CD4-positive, alpha-beta T cell (primary cell): ENCODE measurements at regions of chr9 and their contacts with region 1.

Region 1: DNA sequence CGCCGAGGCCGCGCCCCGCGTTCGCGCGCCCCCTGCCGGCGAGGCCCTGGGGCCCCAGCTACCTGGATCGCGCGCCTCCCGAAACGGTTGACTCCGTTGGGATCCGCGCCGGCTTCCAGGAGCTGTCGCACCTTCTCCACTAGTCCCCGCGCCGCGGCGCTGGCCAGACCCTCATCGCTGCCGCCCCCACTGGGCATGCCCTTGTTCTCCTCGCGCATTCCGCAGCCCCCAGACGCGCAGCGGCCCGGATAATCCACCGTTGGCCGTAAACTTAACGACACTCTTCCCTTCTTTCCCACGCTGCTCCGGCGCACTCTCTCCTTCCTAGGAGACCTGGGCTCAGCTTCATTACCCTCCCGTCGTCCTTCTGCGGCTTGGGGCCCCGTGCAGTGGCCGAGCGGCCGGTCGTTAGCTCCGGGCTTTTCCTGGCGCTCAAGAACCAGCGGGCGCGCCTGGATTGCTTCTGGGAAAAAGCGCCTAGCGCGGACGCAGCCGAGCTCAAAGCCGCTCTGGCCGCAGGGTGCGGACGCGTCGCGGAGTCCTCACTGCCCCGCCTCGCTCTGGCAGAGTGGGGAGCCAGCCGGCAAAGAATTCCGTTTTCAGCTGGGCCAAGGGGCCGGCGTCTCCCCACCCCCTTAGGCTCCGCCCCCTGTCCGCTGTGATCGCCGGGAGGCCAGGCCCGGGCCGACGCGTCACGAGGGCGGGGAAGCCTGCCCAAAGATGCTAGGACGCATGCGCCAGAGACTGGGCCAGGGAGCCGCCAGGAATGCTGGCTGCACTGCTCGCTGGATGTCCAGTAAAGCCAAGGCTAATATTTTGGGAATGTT is at the start of gene CDKN2B:
- DNase-seq: peak in 13 of 14 experiments; percentile 37 to 86 (median 54)
- ATAC-seq: peak; percentile 67
- H3K4me3 ChIP-seq: peak within 1 kb of the TSS; percentile 60
- H3K4me3 Mint-ChIP-seq: peak within 1 kb of the TSS; percentile 68
- H3K27ac ChIP-seq: no peak within 1 kb of the TSS
- H3K27ac Mint-ChIP-seq: no peak within 1 kb of the TSS
- H3K4me1 ChIP-seq: peaks cover 25% of the 10 kb centered on the region
- H3K4me1 Mint-ChIP-seq: peaks cover 23% of the 10 kb centered on the region
- H3K27me3 ChIP-seq: peaks cover 41 to 72% of the 10 kb centered on the region in 2 experiments
- H3K27me3 Mint-ChIP-seq: peaks cover 89% of the 10 kb centered on the region
- CTCF ChIP-seq: peak; percentile 86
- total RNA-seq, gene CDKN2B: not detected

Region 2: GRCh38 chr9:21974548-21975409 is 34.2 kb before region 1 on chr9:
- CTCF ChIA-PET with region 1: interaction called, 10 read pairs
- POLR2A ChIA-PET with region 1: interaction called, 4 read pairs
- intact Hi-C with region 1: loop called (anchors 5 kb)
- DNase-seq: peak in 5 of 14 experiments; percentile 21 to 59 (median 51)
- ATAC-seq: peak; percentile 72
- H3K4me3 ChIP-seq: peak overlapping the region; percentile 54
- H3K4me3 Mint-ChIP-seq: peak overlapping the region; percentile 83
- H3K27ac ChIP-seq: no peak overlapping the region
- H3K27ac Mint-ChIP-seq: no peak overlapping the region
- H3K4me1 ChIP-seq: peaks cover 28% of the 10 kb centered on the region
- H3K4me1 Mint-ChIP-seq: peaks cover 22% of the 10 kb centered on the region
- H3K27me3 ChIP-seq: peaks cover 81 to 99% of the 10 kb centered on the region in 2 experiments
- H3K27me3 Mint-ChIP-seq: peaks cover 98% of the 10 kb centered on the region
- CTCF ChIP-seq: no peak

Region 3: DNA sequence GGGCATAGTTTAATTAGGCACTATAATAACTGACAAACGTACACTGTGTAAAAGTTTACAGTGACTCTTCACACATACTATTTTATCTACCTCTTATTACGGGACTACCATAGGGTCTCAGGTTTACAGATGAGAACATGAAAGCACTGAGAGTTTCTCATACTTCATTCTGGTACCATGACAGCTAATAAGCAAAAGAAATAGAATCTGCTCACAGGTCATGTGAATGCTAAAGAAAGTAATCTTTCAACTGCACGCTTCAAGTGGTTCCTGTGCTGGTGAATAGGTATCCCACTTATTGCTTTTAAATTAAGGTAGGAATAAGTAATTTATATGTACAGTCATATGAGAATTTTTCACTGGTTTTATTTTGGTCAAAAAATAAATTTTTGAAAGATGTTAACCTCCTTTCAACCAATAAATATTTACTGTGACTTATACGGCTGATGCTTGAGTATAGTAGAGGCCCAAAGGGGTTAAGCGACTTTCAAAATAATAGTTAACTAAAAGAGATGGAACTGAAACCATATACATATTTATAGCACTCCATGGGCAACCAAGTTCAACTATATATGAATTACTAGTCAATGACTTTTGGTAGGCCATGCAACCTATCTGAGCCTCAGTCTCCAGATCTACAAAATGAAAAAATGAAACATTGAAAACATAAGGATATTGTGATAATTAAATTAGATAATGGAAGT is 22.8 kb before region 1 on chr9:
- CTCF ChIA-PET with region 1: interaction called, 14 read pairs
- POLR2A ChIA-PET with region 1: no interaction called
- intact Hi-C with region 1: no loop called
- DNase-seq: no peak
- ATAC-seq: no peak
- H3K4me3 ChIP-seq: no peak overlapping the region
- H3K4me3 Mint-ChIP-seq: no peak overlapping the region
- H3K27ac ChIP-seq: no peak overlapping the region
- H3K27ac Mint-ChIP-seq: no peak overlapping the region
- H3K4me1 ChIP-seq: no peaks in the 10 kb centered on the region
- H3K4me1 Mint-ChIP-seq: no peaks in the 10 kb centered on the region
- H3K27me3 ChIP-seq: peaks cover 26 to 82% of the 10 kb centered on the region in 2 experiments
- H3K27me3 Mint-ChIP-seq: peaks cover 98% of the 10 kb centered on the region
- CTCF ChIP-seq: no peak

Region 4: GRCh38 chr9:21995177-21996086 is 13.5 kb before region 1 on chr9:
- CTCF ChIA-PET with region 1: interaction called, 17 read pairs
- POLR2A ChIA-PET with region 1: interaction called, 19 read pairs
- intact Hi-C with region 1: no loop called
- DNase-seq: peak; percentile 49 to 93 (median 64)
- ATAC-seq: peak; percentile 73
- H3K4me3 ChIP-seq: peak overlapping the region; percentile 88
- H3K4me3 Mint-ChIP-seq: peak overlapping the region; percentile 100
- H3K27ac ChIP-seq: peak overlapping the region in 1 of 2 donors; percentile 74
- H3K27ac Mint-ChIP-seq: peak overlapping the region; percentile 78
- H3K4me1 ChIP-seq: peaks cover 20% of the 10 kb centered on the region
- H3K4me1 Mint-ChIP-seq: peaks cover 11% of the 10 kb centered on the region
- H3K27me3 ChIP-seq: peaks cover 0 to 12% of the 10 kb centered on the region in 2 experiments
- H3K27me3 Mint-ChIP-seq: peaks cover 52% of the 10 kb centered on the region
- CTCF ChIP-seq: no peak